Activated CD4-positive, alpha-beta memory T cell treated with anti-CD3 and anti-CD28 coated beads, Interleukin-2, amount 10 ng/mL, durations not matched to agents 7 days and 5 days (primary cell): ENCODE measurements at regions of chr3 and their contacts with region 1.

Region 1: GRCh38 chr3:128969993-128970739 is 23.7 kb downstream of the CFAP92 start:
- DNase-seq: peak; percentile 69
- H3K4me3 Mint-ChIP-seq: no peak overlapping the region
- H3K27ac Mint-ChIP-seq: no peak overlapping the region
- H3K4me1 Mint-ChIP-seq: peaks cover 10% of the 10 kb centered on the region
- H3K27me3 Mint-ChIP-seq: peaks cover 9% of the 10 kb centered on the region

Region 2: DNA sequence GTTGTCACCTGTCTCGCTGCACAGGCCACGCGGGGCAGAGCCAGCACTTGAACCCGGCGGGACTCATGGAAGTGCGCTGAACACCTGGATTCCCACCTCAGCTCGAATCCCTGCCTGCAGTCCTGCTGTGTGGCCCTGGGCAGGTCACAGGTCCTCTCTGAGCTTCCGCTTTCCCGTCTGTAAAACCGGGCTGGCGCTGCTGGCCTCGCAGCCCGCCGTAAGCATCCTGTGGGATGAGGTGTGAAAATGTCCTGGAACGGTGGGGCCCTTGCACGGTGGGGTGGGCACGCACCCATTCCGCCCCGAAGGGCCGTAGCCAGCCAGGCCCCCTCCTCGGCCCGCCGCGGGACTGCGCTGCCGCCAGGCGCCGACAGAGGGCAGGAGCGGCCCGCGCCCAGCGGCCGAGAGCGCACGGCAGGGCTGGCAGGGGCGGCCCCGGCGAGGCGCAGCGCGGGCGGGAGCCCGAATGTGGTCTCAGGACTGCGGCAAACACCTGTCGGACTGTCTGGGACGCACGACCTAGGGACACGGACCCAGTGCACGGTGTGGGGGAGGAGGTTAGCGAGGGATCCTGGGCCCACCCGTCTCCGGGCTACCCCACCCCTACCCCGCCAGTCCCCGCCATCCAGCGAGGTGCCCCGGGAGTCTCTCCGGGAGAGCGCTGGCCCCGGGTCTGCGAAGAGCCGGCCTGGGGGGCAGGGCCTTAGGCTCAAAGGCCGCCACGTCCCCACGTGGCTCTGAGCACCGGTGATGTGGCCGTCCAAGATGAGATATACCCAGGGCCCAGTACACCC is 543.8 kb before region 1 on chr3:
- CTCF ChIA-PET with region 1: no interaction called
- POLR2A ChIA-PET with region 1: no interaction called
- DNase-seq: peak; percentile 61
- H3K4me3 Mint-ChIP-seq: no peak overlapping the region
- H3K27ac Mint-ChIP-seq: no peak overlapping the region
- H3K4me1 Mint-ChIP-seq: no peaks in the 10 kb centered on the region
- H3K27me3 Mint-ChIP-seq: peaks cover 17% of the 10 kb centered on the region

Region 3: DNA sequence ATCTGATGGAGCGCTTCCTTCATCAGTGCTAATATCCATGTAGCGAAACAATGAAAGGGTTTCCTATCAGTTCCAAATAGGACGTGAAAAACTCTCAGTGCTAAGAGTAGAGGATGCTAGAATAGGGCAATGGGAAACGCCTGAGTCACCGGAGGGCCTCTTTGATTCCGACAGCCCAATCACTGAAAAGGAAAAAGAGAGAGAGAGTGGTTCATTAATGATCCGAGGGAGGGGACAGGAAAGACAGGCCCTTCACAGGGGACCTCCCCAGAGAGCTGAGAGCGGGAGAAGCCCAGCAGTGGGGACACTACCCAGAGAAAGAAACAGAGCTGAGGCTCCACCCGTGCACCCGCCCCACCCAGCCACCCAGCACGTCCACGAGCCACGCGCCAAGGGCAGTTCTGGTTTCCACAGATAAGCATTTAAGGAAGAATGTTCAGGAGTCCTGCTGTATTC is 396.4 kb before region 1 on chr3:
- CTCF ChIA-PET with region 1: no interaction called
- POLR2A ChIA-PET with region 1: no interaction called
- DNase-seq: no peak
- H3K4me3 Mint-ChIP-seq: no peak overlapping the region
- H3K27ac Mint-ChIP-seq: no peak overlapping the region
- H3K4me1 Mint-ChIP-seq: peaks cover 18% of the 10 kb centered on the region
- H3K27me3 Mint-ChIP-seq: peaks cover 28% of the 10 kb centered on the region

Region 4: GRCh38 chr3:128854475-128854874 is 115.7 kb before region 1 on chr3:
- CTCF ChIA-PET with region 1: no interaction called
- POLR2A ChIA-PET with region 1: no interaction called
- DNase-seq: no peak
- H3K4me3 Mint-ChIP-seq: no peak overlapping the region
- H3K27ac Mint-ChIP-seq: no peak overlapping the region
- H3K4me1 Mint-ChIP-seq: no peaks in the 10 kb centered on the region
- H3K27me3 Mint-ChIP-seq: no peaks in the 10 kb centered on the region

Region 5: GRCh38 chr3:128879125-128879969 is 90.8 kb before region 1 on chr3 and contains the start of gene ACAD9:
- CTCF ChIA-PET with region 1: interaction called, 15 read pairs
- POLR2A ChIA-PET with region 1: interaction called, 3 read pairs
- DNase-seq: peak; percentile 98
- H3K4me3 Mint-ChIP-seq: peak within 1 kb of the TSS; percentile 85
- H3K27ac Mint-ChIP-seq: peak within 1 kb of the TSS; percentile 86
- H3K4me1 Mint-ChIP-seq: peaks cover 64% of the 10 kb centered on the region
- H3K27me3 Mint-ChIP-seq: peaks cover 3% of the 10 kb centered on the region
- total RNA-seq, gene ACAD9: 42.7 to 48.4 TPM

Region 6: GRCh38 chr3:128993461-128994173 is 23.5 kb after region 1 on chr3 and contains the start of gene CFAP92:
- CTCF ChIA-PET with region 1: interaction called, 37 read pairs
- POLR2A ChIA-PET with region 1: interaction called, 3 read pairs
- DNase-seq: peak; percentile 94
- H3K4me3 Mint-ChIP-seq: peak within 1 kb of the TSS; percentile 32
- H3K27ac Mint-ChIP-seq: no peak within 1 kb of the TSS
- H3K4me1 Mint-ChIP-seq: peaks cover 14% of the 10 kb centered on the region
- H3K27me3 Mint-ChIP-seq: peaks cover 13% of the 10 kb centered on the region
- total RNA-seq, gene CFAP92: 0.15 TPM in 1 of 2 experiments, not detected in the other

Region 7: GRCh38 chr3:129026728-129027543 is 56.8 kb after region 1 on chr3:
- CTCF ChIA-PET with region 1: interaction called, 20 read pairs
- POLR2A ChIA-PET with region 1: interaction called, 3 read pairs
- DNase-seq: peak; percentile 95
- H3K4me3 Mint-ChIP-seq: peak overlapping the region; percentile 69
- H3K27ac Mint-ChIP-seq: peak overlapping the region; percentile 70
- H3K4me1 Mint-ChIP-seq: peaks cover 14% of the 10 kb centered on the region
- H3K27me3 Mint-ChIP-seq: peaks cover 6% of the 10 kb centered on the region

Region 8: DNA sequence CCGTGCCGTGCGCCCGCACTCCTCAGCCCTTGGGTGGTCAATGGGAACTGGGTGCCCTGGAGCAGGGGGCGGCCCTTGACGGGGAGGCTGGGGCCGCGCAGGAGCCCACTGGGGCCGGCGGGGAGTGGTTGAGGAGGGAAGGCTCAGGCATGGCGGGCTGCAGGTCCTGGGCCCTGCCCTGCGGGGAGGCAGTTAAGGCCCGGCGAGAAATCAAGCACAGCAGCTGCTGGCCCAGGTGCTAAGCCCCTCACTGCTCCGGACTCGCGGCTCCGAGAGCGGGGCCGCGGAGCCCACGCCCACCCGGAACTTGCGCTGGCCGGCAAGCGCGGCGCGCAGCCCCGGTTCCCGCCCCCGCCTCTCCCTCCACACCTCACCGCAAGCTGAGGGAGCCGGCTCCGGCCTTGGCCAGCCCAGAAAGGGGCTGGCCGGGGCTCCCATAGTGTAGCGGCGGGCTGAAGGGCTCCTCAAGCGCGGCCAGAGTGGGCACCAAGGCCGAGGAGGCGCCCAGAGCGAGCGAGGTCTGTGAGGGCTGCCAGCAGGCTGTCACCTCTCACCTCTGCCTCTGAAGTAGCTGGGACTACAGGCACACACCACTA is 98.2 kb after region 1 on chr3:
- CTCF ChIA-PET with region 1: interaction called, 14 read pairs
- POLR2A ChIA-PET with region 1: no interaction called
- DNase-seq: no peak
- H3K4me3 Mint-ChIP-seq: no peak overlapping the region
- H3K27ac Mint-ChIP-seq: no peak overlapping the region
- H3K4me1 Mint-ChIP-seq: peaks cover 8% of the 10 kb centered on the region
- H3K27me3 Mint-ChIP-seq: peaks cover 18% of the 10 kb centered on the region

Region 9: DNA sequence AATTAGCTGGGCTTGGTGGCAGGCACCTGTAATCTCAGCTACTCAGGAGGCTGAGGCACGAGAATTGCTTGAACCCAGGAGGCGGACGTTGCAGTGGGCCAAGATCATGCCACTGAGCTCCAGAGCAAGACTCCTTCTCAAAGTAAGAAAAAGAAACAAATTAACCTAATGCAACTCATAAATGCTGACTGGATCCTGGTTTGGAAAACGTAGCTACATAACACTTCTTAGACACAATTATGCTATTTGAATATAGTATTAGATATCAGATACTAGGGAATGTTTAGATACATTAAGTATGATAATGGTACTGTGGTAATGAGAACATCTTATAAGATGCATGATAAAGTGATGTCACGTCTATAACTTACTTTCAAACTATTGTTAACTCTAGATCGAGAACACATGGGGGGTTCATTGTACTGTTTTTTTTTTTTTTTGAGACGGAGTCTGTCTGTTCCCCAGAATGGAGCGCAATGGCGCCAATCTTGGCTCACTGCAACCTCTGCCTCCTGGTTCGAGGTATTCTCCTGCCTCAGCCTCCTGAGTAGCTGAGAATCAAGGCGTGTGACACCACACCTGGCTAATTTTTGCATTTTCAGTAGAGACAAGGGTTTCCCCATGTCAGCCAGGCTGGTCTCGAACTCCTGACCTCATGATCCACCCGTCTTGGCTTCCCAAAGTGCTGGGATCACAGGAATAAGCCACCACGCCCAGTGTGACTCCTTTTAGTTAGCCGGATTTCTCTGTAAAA is 196.6 kb after region 1 on chr3:
- CTCF ChIA-PET with region 1: interaction called, 25 read pairs
- POLR2A ChIA-PET with region 1: interaction called, 5 read pairs
- DNase-seq: no peak
- H3K4me3 Mint-ChIP-seq: no peak overlapping the region
- H3K27ac Mint-ChIP-seq: peak overlapping the region; percentile 16
- H3K4me1 Mint-ChIP-seq: peaks cover 37% of the 10 kb centered on the region
- H3K27me3 Mint-ChIP-seq: no peaks in the 10 kb centered on the region